ENCODE measurements at regions of chr21 and their contacts with region 1.

Region 1: DNA sequence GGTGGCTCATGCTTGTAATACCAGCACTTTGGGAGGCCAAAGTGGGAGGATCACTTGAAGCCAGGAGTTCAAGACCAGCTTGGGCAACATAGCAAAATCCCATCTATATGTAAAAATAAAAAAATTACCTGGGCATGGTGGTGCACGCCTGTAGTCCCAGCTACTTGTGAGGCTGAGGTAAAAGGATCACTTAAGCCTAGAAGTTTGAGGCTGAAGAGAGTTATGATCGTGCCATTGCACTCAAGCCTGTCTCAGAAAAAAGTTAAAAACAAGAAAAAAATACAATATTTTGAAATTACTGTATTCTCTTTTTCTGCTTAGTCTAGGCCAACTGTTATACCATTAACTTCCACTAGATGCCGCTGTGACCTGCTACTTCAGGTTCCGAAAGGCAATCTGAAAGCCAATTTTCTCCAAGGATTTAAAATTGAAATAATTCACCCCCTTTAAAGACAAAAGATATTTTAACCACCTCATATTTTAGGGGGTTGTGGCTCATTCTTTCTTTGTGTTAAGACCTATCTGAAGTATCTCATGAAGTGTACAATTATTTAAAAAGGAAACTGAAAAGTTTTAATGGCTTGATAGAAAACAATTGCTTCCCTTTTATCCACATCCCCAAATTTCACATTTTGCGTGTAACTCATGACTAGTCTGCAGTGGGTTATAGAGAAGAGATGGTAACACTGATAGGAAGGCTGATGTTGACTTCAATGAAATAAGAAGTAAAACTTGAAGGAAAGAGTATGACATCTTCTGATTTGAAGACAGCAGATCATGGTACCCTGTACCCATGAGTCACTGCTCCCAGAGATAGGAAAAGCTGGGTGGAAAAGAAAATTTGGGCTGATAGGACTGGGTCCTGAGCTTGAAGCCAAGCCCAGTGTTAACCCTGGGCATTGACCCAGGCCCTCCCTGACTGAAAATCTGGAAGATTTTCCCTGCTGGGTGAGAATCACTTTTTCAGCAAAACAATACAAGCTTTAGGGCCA is 24.4 kb upstream of the CLDN14 start:
- DNase-seq: no peak
- ATAC-seq: peak; percentile 15
- H3K4me3 ChIP-seq: no peak overlapping the region
- H3K27ac ChIP-seq: peak overlapping the region; percentile 71
- H3K4me1 ChIP-seq: peaks cover 35% of the 10 kb centered on the region
- H3K27me3 ChIP-seq: no peaks in the 10 kb centered on the region
- CTCF ChIP-seq: peak; percentile 78 to 85 (median 85); a peak in 5 of 6 replicates
- EP300 ChIP-seq: no peak
- POLR2A ChIP-seq: no peak
- RAD21 ChIP-seq: peak; percentile 97

Region 2: DNA sequence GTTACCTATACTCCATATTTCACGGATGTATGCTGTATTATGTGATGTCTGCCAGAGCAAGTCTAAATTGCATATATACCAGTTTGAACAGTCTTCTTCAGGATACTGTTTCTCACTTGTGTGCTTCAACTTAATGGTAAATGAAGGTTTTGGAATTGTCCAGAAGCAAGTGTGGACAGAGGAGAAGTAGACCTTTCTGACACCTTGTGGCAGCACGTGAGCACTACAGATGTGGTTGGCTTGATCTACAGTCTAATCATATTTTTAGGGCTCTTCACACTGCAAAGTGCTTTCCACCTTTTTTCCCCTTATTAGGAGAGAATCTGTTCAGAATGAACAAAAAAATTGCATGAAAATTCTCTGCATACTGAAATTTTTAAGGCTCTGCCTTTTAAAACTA is 173.5 kb before region 1 on chr21:
- CTCF ChIA-PET with region 1: no interaction called
- POLR2A ChIA-PET with region 1: no interaction called
- RAD21 ChIA-PET with region 1: no interaction called
- SMC1A ChIA-PET with region 1: no interaction called
- in situ Hi-C with region 1: no loop called
- intact Hi-C with region 1: no loop called
- DNase-seq: peak; percentile 16
- ATAC-seq: peak; percentile 97
- H3K4me3 ChIP-seq: no peak overlapping the region
- H3K27ac ChIP-seq: no peak overlapping the region
- H3K4me1 ChIP-seq: 0 out of 2 replicates have a peak, but pooled peaks cover 3% of the 10 kb centered on the region
- H3K27me3 ChIP-seq: no peaks in the 10 kb centered on the region
- CTCF ChIP-seq: peak; percentile 72 to 79 (median 75); a peak in 5 of 6 replicates
- EP300 ChIP-seq: no peak
- POLR2A ChIP-seq: no peak
- RAD21 ChIP-seq: peak; percentile 87

Region 3: DNA sequence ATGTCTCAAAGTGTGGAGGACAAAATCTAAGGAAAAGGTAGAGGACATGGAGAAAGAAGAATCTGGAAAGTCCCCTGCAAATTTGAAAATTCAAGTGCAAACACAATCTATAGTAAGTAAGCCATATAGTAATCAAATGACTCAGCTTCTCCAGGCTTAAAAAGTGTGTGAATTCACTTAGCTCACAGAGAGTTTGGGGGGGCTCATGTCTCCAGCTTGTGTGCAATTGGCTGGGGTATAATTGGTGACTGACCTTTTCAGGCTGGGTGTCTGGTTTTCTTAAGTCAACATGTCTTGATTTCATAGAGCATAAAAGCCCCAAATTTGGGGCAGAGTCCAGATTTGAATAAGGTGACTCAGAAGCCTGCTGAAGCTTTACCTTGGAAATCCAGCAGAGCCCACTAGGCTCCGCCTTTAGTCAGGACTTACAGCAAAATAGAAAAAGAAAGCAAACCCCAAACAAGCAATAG is 33.1 kb before region 1 on chr21:
- CTCF ChIA-PET with region 1: interaction called, 7 read pairs
- POLR2A ChIA-PET with region 1: interaction called, 4 read pairs
- RAD21 ChIA-PET with region 1: interaction called, 6 read pairs
- SMC1A ChIA-PET with region 1: interaction called, 10 read pairs
- in situ Hi-C with region 1: no loop called
- intact Hi-C with region 1: no loop called
- DNase-seq: peak; percentile 50
- ATAC-seq: peak; percentile 97
- H3K4me3 ChIP-seq: no peak overlapping the region
- H3K27ac ChIP-seq: peak overlapping the region; percentile 54; the same call in 1 of the 2 replicates
- H3K4me1 ChIP-seq: peaks cover 11% of the 10 kb centered on the region
- H3K27me3 ChIP-seq: no peaks in the 10 kb centered on the region
- CTCF ChIP-seq: peak in 1 of 3 experiments; percentile 10; a peak in 1 of 6 replicates
- EP300 ChIP-seq: no peak
- POLR2A ChIP-seq: no peak
- RAD21 ChIP-seq: peak; percentile 23; the same call in 1 of the 2 replicates

Region 4: GRCh38 chr21:36516281-36516680 is 11.9 kb after region 1 on chr21:
- CTCF ChIA-PET with region 1: interaction called, 18 read pairs
- POLR2A ChIA-PET with region 1: interaction called, 37 read pairs
- RAD21 ChIA-PET with region 1: interaction called, 28 read pairs
- SMC1A ChIA-PET with region 1: interaction called, 134 read pairs
- in situ Hi-C with region 1: no loop called
- intact Hi-C with region 1: loop called (anchors 2 kb)
- DNase-seq: no peak
- ATAC-seq: no peak
- H3K4me3 ChIP-seq: peak overlapping the region; percentile 43
- H3K27ac ChIP-seq: peak overlapping the region; percentile 83
- H3K4me1 ChIP-seq: peaks cover 74% of the 10 kb centered on the region
- H3K27me3 ChIP-seq: no peaks in the 10 kb centered on the region
- CTCF ChIP-seq: no peak
- EP300 ChIP-seq: no peak
- POLR2A ChIP-seq: no peak
- RAD21 ChIP-seq: no peak

Region 5: GRCh38 chr21:36542312-36543107 is 38.1 kb after region 1 on chr21:
- CTCF ChIA-PET with region 1: interaction called, 67 read pairs
- POLR2A ChIA-PET with region 1: interaction called, 21 read pairs
- RAD21 ChIA-PET with region 1: interaction called, 58 read pairs
- SMC1A ChIA-PET with region 1: interaction called, 129 read pairs
- in situ Hi-C with region 1: no loop called
- intact Hi-C with region 1: loop called (anchors 1 kb)
- DNase-seq: peak; percentile 70
- ATAC-seq: peak; percentile 73
- H3K4me3 ChIP-seq: peak overlapping the region; percentile 72
- H3K27ac ChIP-seq: peak overlapping the region; percentile 59
- H3K4me1 ChIP-seq: peaks cover 12% of the 10 kb centered on the region
- H3K27me3 ChIP-seq: no peaks in the 10 kb centered on the region
- CTCF ChIP-seq: peak; percentile 70 to 79 (median 73)
- EP300 ChIP-seq: no peak; a peak in 2 of 4 replicates
- POLR2A ChIP-seq: peak; percentile 81
- RAD21 ChIP-seq: peak; percentile 87

Region 6: DNA sequence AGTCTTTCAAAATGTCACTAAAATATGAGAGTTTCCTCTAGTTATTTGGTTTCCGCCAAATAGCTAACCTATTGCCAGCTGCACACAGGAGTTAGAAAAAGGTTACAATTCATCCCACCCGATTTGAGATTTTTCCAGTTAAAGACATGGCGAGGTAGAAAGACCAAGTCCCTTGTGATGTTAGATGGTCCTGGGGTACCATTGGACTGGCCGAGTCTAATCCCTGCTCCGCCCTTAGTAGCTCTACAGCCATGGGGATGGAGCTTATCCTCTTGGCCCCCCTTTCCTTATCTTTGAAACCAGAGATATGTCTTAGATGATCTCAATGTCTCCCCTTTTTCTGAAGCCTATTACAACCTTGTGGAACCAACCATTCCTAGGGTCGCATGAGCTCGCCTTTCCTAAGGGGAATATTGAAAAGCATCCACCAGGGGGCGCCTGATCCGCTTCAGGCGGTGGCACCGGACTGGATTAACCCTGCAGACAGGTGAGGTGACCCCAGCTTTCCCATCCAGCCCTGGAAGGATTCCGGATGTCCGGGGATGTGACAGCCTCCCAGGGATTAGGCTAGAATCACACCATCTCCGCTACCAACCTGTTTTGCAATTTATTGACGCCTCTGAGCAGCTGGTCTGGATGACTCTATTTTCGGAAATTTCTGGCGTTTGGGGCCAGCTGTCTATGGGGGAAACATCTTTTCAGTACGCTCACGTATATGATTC is 126.3 kb after region 1 on chr21:
- CTCF ChIA-PET with region 1: interaction called, 32 read pairs
- POLR2A ChIA-PET with region 1: interaction called, 3 read pairs
- RAD21 ChIA-PET with region 1: interaction called, 18 read pairs
- SMC1A ChIA-PET with region 1: interaction called, 23 read pairs
- in situ Hi-C with region 1: no loop called
- intact Hi-C with region 1: loop called (anchors 2 kb)
- DNase-seq: no peak
- ATAC-seq: peak; percentile 89
- H3K4me3 ChIP-seq: no peak overlapping the region
- H3K27ac ChIP-seq: no peak overlapping the region
- H3K4me1 ChIP-seq: no peaks in the 10 kb centered on the region
- H3K27me3 ChIP-seq: no peaks in the 10 kb centered on the region
- CTCF ChIP-seq: peak; percentile 59 to 78 (median 70)
- EP300 ChIP-seq: no peak
- POLR2A ChIP-seq: no peak
- RAD21 ChIP-seq: peak; percentile 61

Region 7: GRCh38 chr21:36727866-36728265 is 223.5 kb after region 1 on chr21:
- CTCF ChIA-PET with region 1: no interaction called
- POLR2A ChIA-PET with region 1: no interaction called
- RAD21 ChIA-PET with region 1: no interaction called
- SMC1A ChIA-PET with region 1: no interaction called
- in situ Hi-C with region 1: no loop called
- intact Hi-C with region 1: no loop called
- DNase-seq: no peak
- ATAC-seq: no peak
- H3K4me3 ChIP-seq: no peak overlapping the region
- H3K27ac ChIP-seq: no peak overlapping the region
- H3K4me1 ChIP-seq: no peaks in the 10 kb centered on the region
- H3K27me3 ChIP-seq: no peaks in the 10 kb centered on the region; a peak in 2 of 4 replicates
- CTCF ChIP-seq: no peak
- EP300 ChIP-seq: no peak
- POLR2A ChIP-seq: no peak
- RAD21 ChIP-seq: no peak

Region 8: DNA sequence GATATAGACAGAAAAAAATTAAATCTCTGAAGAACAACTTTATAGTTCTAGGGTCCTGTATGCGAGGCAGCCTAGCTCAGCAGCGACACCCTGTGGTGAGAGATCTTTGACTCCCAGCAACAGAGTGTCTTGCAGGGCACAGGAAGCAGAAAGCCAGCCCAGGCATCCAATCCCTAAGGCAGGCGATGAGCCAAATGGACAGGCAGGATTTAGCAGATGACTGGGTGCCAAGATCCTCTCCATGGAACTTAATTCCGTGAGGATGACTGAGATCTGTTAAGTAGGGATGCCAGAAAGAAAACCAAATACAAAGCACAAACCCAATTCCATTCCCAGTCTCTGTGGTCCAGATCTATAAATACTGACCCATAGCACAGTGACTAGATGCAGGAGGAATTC is 423.4 kb after region 1 on chr21:
- CTCF ChIA-PET with region 1: interaction called, 47 read pairs
- POLR2A ChIA-PET with region 1: no interaction called
- RAD21 ChIA-PET with region 1: interaction called, 6 read pairs
- SMC1A ChIA-PET with region 1: interaction called, 7 read pairs
- in situ Hi-C with region 1: loop called (anchors 5 kb)
- intact Hi-C with region 1: loop called (anchors 5 kb)
- DNase-seq: peak; percentile 12
- ATAC-seq: peak; percentile 98
- H3K4me3 ChIP-seq: no peak overlapping the region
- H3K27ac ChIP-seq: no peak overlapping the region
- H3K4me1 ChIP-seq: no peaks in the 10 kb centered on the region
- H3K27me3 ChIP-seq: no peaks in the 10 kb centered on the region
- CTCF ChIP-seq: peak; percentile 86 to 92 (median 89)
- EP300 ChIP-seq: no peak
- POLR2A ChIP-seq: no peak
- RAD21 ChIP-seq: peak; percentile 94

Measured in GM12878 (cell line).